ENCODE measurements at regions of chr12 and their contacts with region 1.

Region 1: DNA sequence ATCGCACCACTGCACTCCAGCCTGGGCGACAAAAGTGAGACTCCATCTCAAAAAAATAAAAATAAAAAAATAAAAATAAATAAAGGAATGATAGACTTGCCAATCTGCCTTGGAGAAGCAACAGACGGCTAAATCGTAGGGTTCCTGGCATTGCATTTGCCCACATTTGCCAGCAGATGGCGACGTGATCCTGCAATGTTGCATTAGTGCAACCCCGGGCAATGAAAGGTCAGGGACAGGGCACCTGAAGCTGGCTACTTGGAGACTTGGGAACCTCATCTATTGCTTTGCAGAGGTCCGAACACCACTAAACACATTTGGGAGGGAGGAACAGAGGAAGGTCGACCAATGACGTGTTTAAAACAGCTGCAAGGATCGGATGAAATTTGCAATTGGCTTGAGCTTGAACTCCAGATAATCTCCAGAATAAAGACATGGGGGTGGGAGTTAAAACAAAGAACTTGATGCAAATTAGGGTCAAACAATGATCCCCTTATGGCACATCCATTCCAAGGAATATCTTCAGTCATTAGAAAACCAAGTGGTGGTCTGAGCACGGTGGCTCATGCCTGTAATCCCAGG is 34.6 kb downstream of the SPRING1 start:
- DNase-seq: peak; percentile 41
- H3K4me3 ChIP-seq: no peak overlapping the region
- H3K27ac ChIP-seq: no peak overlapping the region
- H3K4me1 ChIP-seq: no peaks in the 10 kb centered on the region
- H3K27me3 ChIP-seq: no peaks in the 10 kb centered on the region
- CTCF ChIP-seq: peak; percentile 92 to 96

Region 2: GRCh38 chr12:116142936-116143898 is 560.1 kb before region 1 on chr12:
- CTCF ChIA-PET with region 1: no interaction called
- dilution Hi-C with region 1: no loop called
- in situ Hi-C with region 1: no loop called
- intact Hi-C with region 1: loop called (anchors 10 kb)
- DNase-seq: peak; percentile 75
- H3K4me3 ChIP-seq: no peak overlapping the region
- H3K27ac ChIP-seq: peak overlapping the region; percentile 33
- H3K4me1 ChIP-seq: peaks cover 26% of the 10 kb centered on the region
- H3K27me3 ChIP-seq: no peaks in the 10 kb centered on the region
- CTCF ChIP-seq: no peak

Region 3: DNA sequence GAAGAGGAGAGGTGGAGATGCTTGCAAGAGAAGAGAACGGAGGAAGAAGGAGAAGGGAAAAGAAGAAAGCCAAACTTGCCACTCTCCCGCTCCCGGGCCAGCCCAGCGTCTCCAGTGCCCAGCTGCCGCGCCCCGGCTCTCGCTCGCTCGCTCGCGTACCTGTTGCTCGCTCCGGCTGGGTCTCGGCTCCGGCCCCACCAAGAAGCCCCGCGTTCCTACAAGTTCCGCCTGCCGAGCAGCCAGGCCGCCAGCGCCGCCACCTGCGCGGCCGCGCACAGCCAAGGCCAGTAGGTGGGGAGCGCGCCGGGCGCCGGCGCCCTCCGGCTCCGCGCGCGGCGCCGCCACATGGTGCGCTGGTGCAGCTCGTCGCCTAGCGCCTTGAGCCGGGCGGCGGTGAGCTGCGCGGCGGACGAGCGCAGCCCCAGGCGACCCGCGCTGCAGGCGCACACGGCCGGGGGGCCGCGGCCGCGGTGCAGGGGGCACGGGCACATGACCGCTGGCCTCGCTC is 177.6 kb after region 1 on chr12:
- CTCF ChIA-PET with region 1: interaction called, 4 read pairs
- dilution Hi-C with region 1: no loop called
- in situ Hi-C with region 1: loop called in 1 of 2 experiments (anchors 25 kb)
- intact Hi-C with region 1: loop called (anchors 1 kb)
- DNase-seq: peak; percentile 53
- H3K4me3 ChIP-seq: peak overlapping the region in 2 of 3 experiments; percentile 16 to 29
- H3K27ac ChIP-seq: no peak overlapping the region
- H3K4me1 ChIP-seq: peaks cover 13% of the 10 kb centered on the region
- H3K27me3 ChIP-seq: peaks cover 50% of the 10 kb centered on the region
- CTCF ChIP-seq: no peak

Region 4: DNA sequence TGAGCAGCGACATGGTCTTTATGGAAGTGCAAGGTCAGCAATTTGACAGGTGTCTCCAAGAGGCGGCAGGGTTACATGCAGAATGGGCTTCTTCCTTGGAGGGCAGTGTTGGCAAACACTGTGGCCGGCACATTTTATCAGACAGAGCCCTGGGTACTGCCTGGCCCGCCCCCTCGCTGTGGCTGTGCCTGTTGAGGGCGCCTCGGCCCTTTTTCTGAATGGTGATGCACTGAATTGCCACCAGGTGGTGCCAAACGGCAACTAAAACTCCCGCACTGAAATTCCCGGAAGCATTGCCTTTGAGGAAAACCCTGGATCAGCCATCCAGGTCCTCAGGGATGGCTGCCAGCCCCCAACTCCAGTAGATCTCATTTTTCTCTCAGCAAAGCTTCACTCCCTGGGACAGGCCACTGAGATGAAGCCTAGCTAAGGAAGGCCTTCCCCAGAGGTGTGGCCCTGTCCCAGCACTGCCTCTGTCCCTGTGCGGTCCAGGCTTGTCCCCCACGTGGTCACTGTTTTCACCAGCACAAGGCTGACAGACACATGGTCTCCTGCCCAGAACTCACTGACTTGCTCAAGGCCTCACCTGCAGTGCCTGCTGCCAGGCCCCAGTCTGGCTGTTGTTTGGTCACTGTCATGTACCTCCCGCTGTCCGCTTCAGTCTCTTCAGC is 322.3 kb after region 1 on chr12:
- CTCF ChIA-PET with region 1: no interaction called
- dilution Hi-C with region 1: no loop called
- in situ Hi-C with region 1: no loop called
- intact Hi-C with region 1: loop called (anchors 1 kb)
- DNase-seq: peak; percentile 44
- H3K4me3 ChIP-seq: no peak overlapping the region
- H3K27ac ChIP-seq: no peak overlapping the region
- H3K4me1 ChIP-seq: peaks cover 3% of the 10 kb centered on the region
- H3K27me3 ChIP-seq: no peaks in the 10 kb centered on the region
- CTCF ChIP-seq: peak; percentile 84 to 87

Region 5: DNA sequence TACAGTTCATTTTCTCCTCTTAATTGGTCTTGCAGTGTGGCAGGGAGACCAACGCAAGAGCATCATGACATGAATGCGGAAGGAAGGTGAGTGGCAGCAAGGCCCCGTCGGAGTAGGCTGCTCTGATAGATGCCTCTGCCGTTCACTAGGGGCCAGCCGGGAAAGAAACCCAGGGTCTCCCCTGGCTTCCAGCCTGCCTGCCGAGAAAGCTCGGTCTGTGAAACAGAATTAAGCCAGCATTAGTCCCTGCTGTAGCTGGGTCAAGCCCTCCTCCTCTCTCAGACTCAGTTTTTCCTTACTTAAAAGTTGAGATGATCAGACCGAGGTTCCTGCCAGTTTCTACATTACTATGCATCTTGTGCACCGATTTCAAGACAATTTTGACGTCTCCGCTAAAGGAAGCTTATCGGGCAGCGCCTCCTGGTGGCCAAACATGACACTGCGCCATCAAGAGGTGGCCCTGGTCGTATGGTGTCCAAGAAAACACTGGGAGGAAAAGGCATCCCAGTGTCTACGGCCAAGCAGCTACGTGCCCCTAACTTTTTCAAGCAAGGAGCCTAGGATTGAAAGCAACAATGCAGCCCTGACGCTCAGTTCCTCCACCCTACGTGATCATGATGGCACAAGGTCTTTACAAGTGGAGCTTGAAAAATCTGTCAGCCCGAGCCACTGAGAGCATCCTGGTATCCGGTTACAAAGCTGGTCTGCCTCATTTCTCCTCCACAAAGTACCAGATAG is 1133.9 kb after region 1 on chr12:
- CTCF ChIA-PET with region 1: no interaction called
- dilution Hi-C with region 1: no loop called
- in situ Hi-C with region 1: no loop called
- intact Hi-C with region 1: loop called (anchors 5 kb)
- DNase-seq: peak; percentile 39
- H3K4me3 ChIP-seq: no peak overlapping the region
- H3K27ac ChIP-seq: no peak overlapping the region
- H3K4me1 ChIP-seq: no peaks in the 10 kb centered on the region
- H3K27me3 ChIP-seq: no peaks in the 10 kb centered on the region
- CTCF ChIP-seq: peak; percentile 94